ENCODE measurements at regions of chr7 and their contacts with region 1.

Region 1: DNA sequence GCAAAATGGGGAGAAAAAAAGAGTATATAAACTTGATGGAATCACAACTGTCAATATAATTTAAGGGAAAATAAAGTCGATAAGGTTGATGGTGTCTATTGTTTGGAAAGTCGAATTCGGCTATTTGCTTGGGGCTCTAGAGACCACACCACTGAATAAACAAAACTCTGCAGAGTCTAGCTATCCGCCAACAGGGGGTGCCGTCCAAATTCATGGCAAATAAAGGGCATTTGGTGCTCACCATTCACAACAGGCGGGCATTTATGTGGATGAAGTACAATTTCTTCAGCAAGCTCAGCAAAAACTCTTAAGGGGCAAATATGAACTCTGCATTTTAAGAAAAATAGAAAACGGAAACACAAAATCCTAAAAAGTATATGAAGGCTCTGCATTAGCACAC is 23.3 kb downstream of the CD36 start:
- DNase-seq: no peak
- H3K4me3 ChIP-seq: no peak overlapping the region
- H3K27ac ChIP-seq: no peak overlapping the region
- H3K4me1 ChIP-seq: no peaks in the 10 kb centered on the region
- H3K27me3 ChIP-seq: no peaks in the 10 kb centered on the region
- CTCF ChIP-seq: peak; percentile 36 to 52 (median 49)
- EP300 ChIP-seq: no peak
- POLR2A ChIP-seq: no peak
- RAD21 ChIP-seq: peak; percentile 27 to 47; a peak in 3 of 4 replicates

Region 2: DNA sequence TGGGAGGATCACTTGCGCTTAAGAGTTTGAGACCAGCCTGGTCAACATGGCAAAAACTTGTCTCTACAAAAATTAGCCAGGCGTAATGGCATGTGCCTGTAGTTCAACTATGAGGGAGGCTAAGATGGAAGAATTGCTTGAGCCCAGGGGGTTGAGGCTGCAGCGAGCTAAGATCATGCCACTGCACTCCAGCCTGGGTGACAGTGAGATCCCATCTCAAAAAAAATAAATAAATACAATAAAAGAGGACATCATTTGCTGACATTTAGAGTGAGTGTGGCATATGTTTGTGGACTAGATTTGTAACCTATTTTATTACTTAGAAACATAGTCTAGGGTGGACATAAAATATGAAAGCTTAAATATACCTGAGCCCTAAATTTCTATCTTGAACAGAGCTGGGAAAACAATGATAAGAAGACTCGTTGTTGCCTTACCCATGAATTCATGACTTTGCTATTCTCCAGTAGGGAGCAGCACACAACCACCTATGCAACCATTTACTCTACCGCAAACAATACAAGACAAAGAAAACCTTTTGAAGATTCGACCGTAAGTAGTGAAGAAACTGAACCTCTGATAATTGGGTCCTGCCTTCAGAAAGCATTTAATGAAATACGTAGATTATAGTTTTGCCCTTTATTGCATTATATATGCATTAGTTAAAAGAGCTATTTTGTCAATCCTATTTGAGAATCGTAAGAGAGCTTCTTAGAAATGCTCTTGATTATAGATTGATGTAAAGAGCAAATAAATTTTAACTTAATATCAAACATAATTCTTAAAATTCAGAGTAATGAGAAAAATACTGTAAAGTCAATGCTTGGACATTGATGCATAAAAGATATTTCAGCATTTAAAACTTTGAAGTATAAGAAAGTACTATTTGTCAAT is 233.3 kb before region 1 on chr7:
- CTCF ChIA-PET with region 1: interaction called, 21 read pairs
- POLR2A ChIA-PET with region 1: no interaction called
- DNase-seq: no peak
- H3K4me3 ChIP-seq: no peak overlapping the region
- H3K27ac ChIP-seq: no peak overlapping the region
- H3K4me1 ChIP-seq: 0 out of 7 replicates have a peak, but pooled peaks cover 0 to 3% (median 0%) of the 10 kb centered on the region in 4 experiments
- H3K27me3 ChIP-seq: no peaks in the 10 kb centered on the region
- CTCF ChIP-seq: peak in 2 of 3 experiments; percentile 63 to 70; a peak in 3 of 4 replicates
- EP300 ChIP-seq: no peak
- POLR2A ChIP-seq: no peak
- RAD21 ChIP-seq: peak; percentile 89 to 91

Region 3: DNA sequence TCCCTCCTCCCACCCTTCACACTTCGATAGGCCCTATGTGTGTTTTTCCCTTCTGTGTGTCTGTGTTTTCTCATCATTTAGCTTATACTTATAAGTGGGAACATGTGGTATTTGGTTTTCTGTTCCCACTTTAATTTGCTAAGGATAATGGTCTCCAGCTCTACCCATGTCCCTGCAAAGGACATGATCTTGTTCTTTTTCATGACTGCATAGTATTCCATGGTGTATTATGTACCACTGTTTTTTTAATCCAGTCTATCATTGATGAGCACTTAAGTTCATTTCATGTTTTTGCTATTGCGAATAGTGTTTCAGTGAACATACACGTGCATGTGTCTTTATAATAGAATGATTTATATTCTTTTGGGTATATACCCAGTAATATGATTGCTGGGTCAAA is 103.6 kb before region 1 on chr7:
- CTCF ChIA-PET with region 1: no interaction called
- POLR2A ChIA-PET with region 1: no interaction called
- DNase-seq: no peak
- H3K4me3 ChIP-seq: no peak overlapping the region
- H3K27ac ChIP-seq: no peak overlapping the region
- H3K4me1 ChIP-seq: no peaks in the 10 kb centered on the region
- H3K27me3 ChIP-seq: no peaks in the 10 kb centered on the region
- CTCF ChIP-seq: no peak
- EP300 ChIP-seq: no peak
- POLR2A ChIP-seq: no peak
- RAD21 ChIP-seq: no peak

Region 4: GRCh38 chr7:80651471-80651870 is 10.3 kb before region 1 on chr7:
- CTCF ChIA-PET with region 1: interaction called, 14 read pairs
- POLR2A ChIA-PET with region 1: no interaction called
- DNase-seq: no peak
- H3K4me3 ChIP-seq: no peak overlapping the region
- H3K27ac ChIP-seq: no peak overlapping the region
- H3K4me1 ChIP-seq: no peaks in the 10 kb centered on the region
- H3K27me3 ChIP-seq: no peaks in the 10 kb centered on the region
- CTCF ChIP-seq: no peak
- EP300 ChIP-seq: no peak
- POLR2A ChIP-seq: no peak
- RAD21 ChIP-seq: no peak

Region 5: DNA sequence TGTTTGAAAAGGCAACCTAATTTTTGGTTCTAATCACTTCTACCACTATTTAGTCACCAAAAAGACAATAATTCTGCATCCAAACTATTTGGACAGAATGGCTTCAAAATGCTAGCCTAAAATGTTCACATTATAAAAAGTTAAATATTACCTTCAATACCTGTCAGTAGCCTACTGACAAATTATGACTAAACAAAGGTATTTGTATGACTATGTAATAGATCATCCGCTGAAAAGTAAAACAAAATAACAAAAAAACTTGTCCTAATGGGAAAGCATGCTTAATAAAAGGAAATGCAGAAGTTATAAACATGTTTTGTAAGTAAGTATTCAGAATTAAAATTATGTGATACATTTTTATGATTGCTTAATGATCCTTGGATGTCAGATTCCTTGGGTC is 13.4 kb after region 1 on chr7:
- CTCF ChIA-PET with region 1: interaction called, 10 read pairs
- POLR2A ChIA-PET with region 1: no interaction called
- DNase-seq: no peak
- H3K4me3 ChIP-seq: no peak overlapping the region
- H3K27ac ChIP-seq: no peak overlapping the region
- H3K4me1 ChIP-seq: no peaks in the 10 kb centered on the region
- H3K27me3 ChIP-seq: no peaks in the 10 kb centered on the region
- CTCF ChIP-seq: no peak
- EP300 ChIP-seq: no peak
- POLR2A ChIP-seq: no peak
- RAD21 ChIP-seq: no peak

Region 6: DNA sequence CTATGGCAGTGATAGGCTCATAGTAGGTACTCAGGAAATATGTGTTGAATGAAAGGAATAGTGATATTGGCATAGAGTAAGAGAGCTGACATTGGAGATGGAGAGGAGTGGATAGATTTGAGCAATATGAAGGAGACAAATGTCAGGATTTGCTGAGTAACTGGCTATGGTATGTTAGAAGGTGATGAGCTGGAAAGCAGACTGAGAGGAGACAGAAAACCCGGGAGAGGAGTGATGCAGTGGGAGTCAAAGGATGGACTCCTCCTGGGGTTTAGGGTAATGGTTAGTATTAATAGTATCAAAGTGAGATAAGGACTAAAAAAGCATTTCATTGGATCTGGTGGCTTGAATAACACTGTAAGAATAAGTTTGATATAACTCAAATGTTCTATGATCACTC is 41.5 kb after region 1 on chr7:
- CTCF ChIA-PET with region 1: no interaction called
- POLR2A ChIA-PET with region 1: no interaction called
- DNase-seq: no peak
- H3K4me3 ChIP-seq: no peak overlapping the region
- H3K27ac ChIP-seq: no peak overlapping the region
- H3K4me1 ChIP-seq: 0 out of 7 replicates have a peak, but pooled peaks cover 0 to 2% (median 0%) of the 10 kb centered on the region in 4 experiments
- H3K27me3 ChIP-seq: no peaks in the 10 kb centered on the region
- CTCF ChIP-seq: no peak
- EP300 ChIP-seq: no peak
- POLR2A ChIP-seq: no peak
- RAD21 ChIP-seq: no peak